ENCODE measurements at regions of chr17 and their contacts with region 1.

Region 1: DNA sequence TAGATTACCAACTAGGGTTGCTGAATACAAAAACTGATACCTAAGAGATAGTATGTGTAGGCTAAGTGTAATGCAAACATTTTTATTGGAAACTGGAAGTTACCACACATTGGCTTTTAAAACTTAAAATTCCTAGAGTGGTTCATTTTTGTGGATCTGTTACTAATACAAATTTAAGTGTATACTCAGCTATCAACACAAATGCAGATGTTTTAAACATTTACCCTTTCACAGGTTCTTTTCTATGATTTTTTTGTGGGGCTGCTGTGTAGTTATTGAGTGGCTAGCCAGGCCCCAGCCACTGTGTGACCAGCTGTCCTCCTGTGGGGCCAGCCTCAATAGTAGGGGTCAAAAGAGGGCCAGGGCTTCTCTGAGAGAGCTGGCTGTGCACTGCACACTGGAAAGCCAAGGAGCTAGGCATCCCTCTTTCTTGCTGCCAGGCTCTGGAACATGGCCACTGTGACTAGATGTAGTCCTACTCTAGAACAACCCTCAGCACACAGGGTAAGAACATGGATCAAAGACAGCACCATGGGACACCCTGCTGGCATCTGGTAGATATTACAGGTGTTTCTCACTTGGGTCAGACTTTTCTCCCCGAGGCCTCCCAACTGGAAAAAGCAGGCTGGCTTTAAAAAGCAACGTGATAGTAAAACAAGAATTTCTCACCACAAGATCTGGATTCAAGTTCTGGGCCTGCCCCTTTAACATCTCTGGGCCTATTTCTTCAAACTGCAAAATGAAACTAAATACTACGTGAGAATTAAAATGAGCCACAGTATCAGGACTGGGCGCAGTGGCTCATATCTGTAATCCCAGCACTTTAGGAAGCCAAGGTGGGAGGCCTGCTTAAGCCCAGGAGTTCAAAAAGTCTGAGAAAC is 7.3 kb upstream of the VEZF1 start:
- DNase-seq: peak; percentile 79
- H3K4me3 ChIP-seq: no peak overlapping the region
- H3K27ac ChIP-seq: peak overlapping the region; percentile 18 to 33; a peak in 3 of 4 replicates
- H3K4me1 ChIP-seq: peaks cover 0 to 13% of the 10 kb centered on the region in 2 experiments; a peak in 2 of 4 replicates
- H3K27me3 ChIP-seq: no peaks in the 10 kb centered on the region
- CTCF ChIP-seq: peak; percentile 87
- EP300 ChIP-seq: no peak
- RAD21 ChIP-seq: peak; percentile 97

Region 2: GRCh38 chr17:57130761-57131461 is 864.4 kb before region 1 on chr17:
- CTCF ChIA-PET with region 1: interaction called, 13 read pairs
- POLR2A ChIA-PET with region 1: no interaction called
- DNase-seq: peak; percentile 98
- H3K4me3 ChIP-seq: peak overlapping the region; percentile 28 to 46; a peak in 2 of 4 replicates
- H3K27ac ChIP-seq: peak overlapping the region in 1 of 2 experiments; percentile 50; a peak in 1 of 4 replicates
- H3K4me1 ChIP-seq: peaks cover 0 to 12% of the 10 kb centered on the region in 2 experiments; a peak in 1 of 4 replicates
- H3K27me3 ChIP-seq: no peaks in the 10 kb centered on the region
- CTCF ChIP-seq: peak; percentile 90
- EP300 ChIP-seq: 0 out of 4 replicates have a peak, but pooled peaks of 1 of the 2 experiments have one; percentile 28
- RAD21 ChIP-seq: peak; percentile 92

Region 3: DNA sequence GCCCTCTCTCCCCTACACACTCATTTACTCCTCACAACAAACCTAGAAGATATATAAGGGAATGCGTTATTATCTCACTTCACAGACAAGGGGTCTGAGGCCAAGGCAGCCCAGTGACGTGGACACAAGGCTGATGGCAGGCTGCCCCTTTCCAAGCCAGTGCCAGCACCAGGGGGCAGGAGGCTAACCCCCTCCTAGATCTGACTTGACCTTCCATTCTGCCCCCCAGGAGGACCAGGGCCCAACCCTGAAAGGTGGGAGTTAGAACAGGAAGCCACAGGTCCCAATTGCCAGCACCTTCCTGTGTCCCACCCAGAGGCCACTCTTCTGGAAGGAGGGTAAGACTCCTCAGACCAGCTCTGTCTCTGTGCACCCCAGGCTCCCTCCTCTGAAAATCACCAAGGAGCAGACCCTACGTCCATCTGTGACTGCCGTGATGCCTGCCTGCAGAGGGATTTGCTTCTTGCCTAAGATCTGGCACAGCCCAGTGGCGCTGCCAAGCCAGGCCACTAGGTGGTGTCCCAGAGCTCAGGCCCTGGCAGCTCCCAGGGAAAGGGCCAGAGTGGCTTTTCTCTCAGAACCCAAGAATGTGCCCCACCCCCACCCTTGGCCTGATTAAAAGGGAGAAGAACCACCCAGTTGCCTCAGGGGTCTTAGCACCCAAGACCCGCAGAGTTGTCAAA is 103.0 kb before region 1 on chr17:
- CTCF ChIA-PET with region 1: interaction called, 162 read pairs
- POLR2A ChIA-PET with region 1: interaction called, 3 read pairs
- DNase-seq: peak; percentile 92
- H3K4me3 ChIP-seq: peak overlapping the region in 1 of 2 experiments; percentile 21; a peak in 1 of 4 replicates
- H3K27ac ChIP-seq: peak overlapping the region; percentile 44 to 96
- H3K4me1 ChIP-seq: peaks cover 32 to 60% of the 10 kb centered on the region in 2 experiments
- H3K27me3 ChIP-seq: no peaks in the 10 kb centered on the region
- CTCF ChIP-seq: peak; percentile 100
- EP300 ChIP-seq: no peak
- RAD21 ChIP-seq: peak; percentile 91

Region 4: DNA sequence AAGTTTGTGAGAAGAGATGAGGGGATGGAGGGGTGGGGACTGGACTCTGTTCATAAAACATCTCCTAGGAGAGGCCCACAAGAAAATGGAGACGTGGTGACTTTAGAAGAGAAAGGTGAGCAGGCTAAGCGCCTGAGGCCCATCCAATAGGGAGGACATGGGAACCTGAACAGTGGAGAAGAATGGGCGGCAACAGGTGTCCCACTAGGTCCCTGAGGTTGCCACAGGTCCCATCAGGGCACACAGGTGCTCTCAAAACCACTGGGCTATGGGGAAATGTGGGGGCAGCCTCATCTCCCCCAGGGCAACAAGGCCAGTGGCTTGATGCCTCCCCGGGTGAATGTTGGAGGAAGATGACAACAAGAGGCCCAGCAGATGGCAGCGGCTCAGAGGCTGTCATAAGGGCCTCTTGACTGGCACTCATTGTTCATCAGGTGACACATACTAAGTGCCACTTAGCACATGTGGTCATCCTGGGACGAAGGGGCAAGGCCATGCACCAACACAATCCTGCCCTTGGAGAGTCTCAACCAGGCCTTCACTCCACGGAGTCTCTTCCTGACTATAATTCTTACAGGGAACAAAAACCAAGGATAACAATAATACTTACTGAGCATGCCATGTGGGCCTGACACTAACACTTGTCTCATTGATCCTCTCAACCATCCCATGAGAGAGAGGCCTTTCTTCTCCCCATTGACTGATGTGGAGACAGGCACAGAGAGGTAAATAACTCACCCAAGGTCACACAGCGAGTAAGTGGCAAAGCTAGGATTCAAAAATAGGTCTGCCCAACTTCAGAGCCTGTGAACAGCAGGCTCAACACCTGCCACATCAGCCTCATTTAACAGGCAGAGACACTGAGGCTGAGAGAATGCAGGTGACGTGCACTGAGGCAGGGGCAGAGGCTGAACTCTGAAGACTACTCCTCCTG is 78.1 kb before region 1 on chr17:
- CTCF ChIA-PET with region 1: interaction called, 10 read pairs
- POLR2A ChIA-PET with region 1: no interaction called
- DNase-seq: no peak
- H3K4me3 ChIP-seq: no peak overlapping the region
- H3K27ac ChIP-seq: no peak overlapping the region
- H3K4me1 ChIP-seq: peaks cover 9 to 45% of the 10 kb centered on the region in 2 experiments; a peak in 1 of 4 replicates
- H3K27me3 ChIP-seq: no peaks in the 10 kb centered on the region
- CTCF ChIP-seq: no peak
- EP300 ChIP-seq: no peak
- RAD21 ChIP-seq: peak; percentile 49

Region 5: DNA sequence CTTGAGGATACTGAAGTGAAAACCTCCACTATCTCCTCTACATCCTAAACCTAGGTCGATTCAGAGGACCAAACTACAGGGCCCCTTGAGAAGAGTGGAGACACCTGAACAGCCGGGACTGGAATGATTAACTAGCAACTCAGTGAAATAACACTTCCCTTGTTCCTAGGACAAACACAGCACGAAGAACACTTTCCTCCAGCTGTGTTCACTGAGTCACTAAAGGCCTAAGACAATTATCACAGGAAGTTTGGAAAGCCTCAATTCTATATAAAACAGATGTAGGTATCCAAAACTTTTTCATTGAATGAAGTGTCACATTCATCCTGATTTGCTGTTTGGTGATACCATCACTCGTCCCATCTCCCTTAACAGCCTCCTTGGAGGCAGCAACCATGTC is 24.6 kb before region 1 on chr17:
- CTCF ChIA-PET with region 1: interaction called, 15 read pairs
- POLR2A ChIA-PET with region 1: no interaction called
- DNase-seq: no peak
- H3K4me3 ChIP-seq: no peak overlapping the region
- H3K27ac ChIP-seq: peak overlapping the region; percentile 26 to 42; a peak in 2 of 4 replicates
- H3K4me1 ChIP-seq: peaks cover 13 to 25% of the 10 kb centered on the region in 2 experiments; a peak in 2 of 4 replicates
- H3K27me3 ChIP-seq: no peaks in the 10 kb centered on the region
- CTCF ChIP-seq: no peak
- EP300 ChIP-seq: no peak; a peak in 1 of 4 replicates
- RAD21 ChIP-seq: no peak

Region 6: GRCh38 chr17:58024945-58025344 is 29.6 kb after region 1 on chr17:
- CTCF ChIA-PET with region 1: interaction called, 11 read pairs
- POLR2A ChIA-PET with region 1: no interaction called
- DNase-seq: no peak
- H3K4me3 ChIP-seq: no peak overlapping the region
- H3K27ac ChIP-seq: no peak overlapping the region
- H3K4me1 ChIP-seq: no peaks in the 10 kb centered on the region
- H3K27me3 ChIP-seq: peaks cover 10% of the 10 kb centered on the region; the same call in 1 of the 2 replicates
- CTCF ChIP-seq: no peak
- EP300 ChIP-seq: no peak
- RAD21 ChIP-seq: no peak

Region 7: DNA sequence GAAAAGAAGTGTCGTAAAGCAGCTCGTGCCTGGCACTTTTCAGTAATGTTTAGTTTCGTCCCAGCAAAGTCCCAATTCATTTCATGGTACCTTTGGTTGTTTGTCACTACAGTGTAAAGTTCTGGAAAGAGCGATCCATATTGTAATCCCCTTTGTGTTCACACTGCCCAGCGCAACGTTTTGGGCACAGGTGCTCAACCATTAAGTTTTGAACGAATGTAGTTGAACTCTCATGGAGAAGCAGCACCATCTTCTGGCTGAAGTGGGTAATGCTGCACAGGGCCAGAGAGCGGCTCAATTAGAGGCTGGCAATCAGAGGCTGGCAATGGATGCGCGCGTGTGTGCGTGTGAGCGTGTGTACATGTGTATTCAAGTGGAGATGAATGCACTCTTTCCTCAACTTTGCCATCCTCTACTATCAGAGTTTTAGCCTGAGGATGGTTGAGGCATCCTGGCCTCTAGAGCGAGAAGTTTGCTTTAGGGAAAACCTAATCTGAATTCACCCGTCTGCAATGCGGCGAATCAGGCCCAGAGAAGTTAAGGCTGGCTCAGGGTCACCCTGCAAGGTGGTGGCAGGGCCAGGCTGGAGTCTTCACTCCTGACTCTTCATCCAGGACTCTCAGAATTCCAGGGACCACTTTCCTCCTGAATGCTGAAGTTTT is 117.8 kb after region 1 on chr17:
- CTCF ChIA-PET with region 1: interaction called, 144 read pairs
- POLR2A ChIA-PET with region 1: interaction called, 4 read pairs
- DNase-seq: peak; percentile 79
- H3K4me3 ChIP-seq: no peak overlapping the region
- H3K27ac ChIP-seq: no peak overlapping the region
- H3K4me1 ChIP-seq: no peaks in the 10 kb centered on the region
- H3K27me3 ChIP-seq: 0 out of 2 replicates have a peak, but pooled peaks cover 18% of the 10 kb centered on the region
- CTCF ChIP-seq: peak; percentile 99
- EP300 ChIP-seq: no peak
- RAD21 ChIP-seq: peak; percentile 99